ENCODE measurements at regions of chr1 and their contacts with region 1.

Region 1: DNA sequence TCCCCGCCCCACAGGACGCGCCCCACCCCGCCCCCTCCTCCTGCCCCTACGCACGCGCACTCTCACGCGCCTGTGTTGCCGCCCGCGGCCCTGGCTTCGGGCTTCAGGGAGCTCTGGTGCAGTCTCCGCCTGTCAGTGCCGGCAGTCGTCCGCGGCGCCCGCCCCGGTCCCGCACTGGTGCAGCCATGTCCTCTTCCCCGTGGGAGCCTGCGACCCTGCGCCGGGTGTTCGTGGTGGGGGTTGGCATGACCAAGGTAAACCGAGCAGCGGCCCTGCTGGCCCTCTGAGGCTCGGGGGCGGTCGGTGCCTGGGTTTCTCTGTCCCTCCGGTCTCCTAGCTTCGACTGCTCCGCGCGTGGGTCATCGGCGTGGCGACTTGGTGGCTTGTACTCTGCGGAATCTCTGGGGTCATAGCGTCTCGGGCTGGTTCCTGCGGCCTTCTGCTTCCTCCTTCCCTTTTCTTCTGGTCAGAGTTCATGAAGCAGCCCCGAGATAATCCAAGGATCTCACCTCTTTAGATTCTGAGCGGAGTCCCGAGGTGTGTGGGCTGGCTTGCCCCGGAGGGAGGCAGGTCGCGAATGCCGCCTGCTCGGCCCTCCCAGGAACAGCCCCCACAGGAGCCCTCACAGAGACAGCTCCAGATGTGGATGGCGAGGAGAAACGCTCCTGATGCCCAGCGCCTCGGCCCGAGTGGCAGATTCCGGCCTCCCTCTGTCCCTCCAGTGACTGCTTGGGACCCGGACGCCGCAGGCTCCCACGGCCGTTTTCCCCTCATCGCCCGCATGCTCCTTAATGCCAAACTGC is at the start of gene SCP2:
- DNase-seq: peak; percentile 84 to 88 (median 86)
- H3K4me3 ChIP-seq: peak within 1 kb of the TSS; percentile 74
- H3K27ac ChIP-seq: peak within 1 kb of the TSS; percentile 72 to 82
- H3K4me1 ChIP-seq: peaks cover 9% of the 10 kb centered on the region
- H3K27me3 ChIP-seq: no peaks in the 10 kb centered on the region
- CTCF ChIP-seq: no peak
- EP300 ChIP-seq: no peak
- POLR2A ChIP-seq: peak; percentile 63
- total RNA-seq, gene SCP2: 58.4 to 150 (median 105) TPM

Region 2: DNA sequence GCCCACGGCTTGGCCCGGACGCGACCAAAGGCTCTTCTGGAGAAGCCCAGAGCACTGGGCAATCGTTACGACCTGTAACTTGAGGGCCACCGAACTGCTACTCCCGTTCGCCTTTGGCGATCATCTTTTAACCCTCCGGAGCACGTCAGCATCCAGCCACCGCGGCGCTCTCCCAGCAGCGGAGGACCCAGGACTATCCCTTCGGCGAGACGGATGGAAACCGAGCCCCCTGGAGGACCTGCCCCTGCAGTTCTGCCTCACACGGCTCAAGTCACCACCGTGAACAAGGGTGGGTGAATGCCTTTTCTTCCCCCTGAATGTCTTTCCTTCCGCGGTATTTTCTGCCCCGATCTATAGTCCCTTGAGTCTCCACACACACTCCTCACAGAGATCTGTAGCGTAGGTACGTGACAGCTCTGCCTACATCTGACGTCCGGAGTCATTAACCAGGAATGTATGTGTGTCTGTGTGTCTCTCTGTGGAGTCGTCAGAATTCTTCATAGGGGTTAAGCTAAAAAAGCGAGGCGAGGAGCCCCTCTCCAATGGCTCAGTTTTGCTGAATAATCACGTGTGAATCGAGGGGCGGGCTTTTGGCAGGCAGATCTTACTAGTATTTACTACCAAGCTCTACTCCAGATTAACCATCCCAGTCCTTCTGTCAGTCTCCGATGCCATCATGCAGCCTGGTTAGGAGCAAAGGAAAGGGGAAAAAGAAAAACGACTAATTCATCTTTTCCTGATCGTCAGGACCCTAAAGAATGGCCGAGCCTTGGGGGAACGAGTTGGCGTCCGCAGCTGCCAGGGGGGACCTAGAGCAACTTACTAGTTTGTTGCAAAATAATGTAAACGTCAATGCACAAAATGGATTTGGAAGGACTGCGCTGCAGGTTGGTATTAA is 1957.6 kb before region 1 on chr1 and contains the start of gene CDKN2C:
- intact Hi-C with region 1: loop called in 1 of 4 experiments (anchors 10 kb)
- DNase-seq: peak; percentile 79 to 88 (median 85)
- H3K4me3 ChIP-seq: peak within 1 kb of the TSS; percentile 77
- H3K27ac ChIP-seq: peak within 1 kb of the TSS; percentile 98 to 99
- H3K4me1 ChIP-seq: peaks cover 4% of the 10 kb centered on the region
- H3K27me3 ChIP-seq: no peaks in the 10 kb centered on the region
- CTCF ChIP-seq: no peak
- EP300 ChIP-seq: no peak
- POLR2A ChIP-seq: no peak
- total RNA-seq, gene CDKN2C: 17.4 to 49.2 (median 32.7) TPM

Region 3: GRCh38 chr1:52702886-52703787 is 224.3 kb before region 1 on chr1:
- intact Hi-C with region 1: loop called in 1 of 4 experiments (anchors 10 kb)
- DNase-seq: peak; percentile 83 to 90 (median 84)
- H3K4me3 ChIP-seq: peak overlapping the region; percentile 58
- H3K27ac ChIP-seq: peak overlapping the region in 1 of 2 donors; percentile 60
- H3K4me1 ChIP-seq: peaks cover 3% of the 10 kb centered on the region
- H3K27me3 ChIP-seq: no peaks in the 10 kb centered on the region
- CTCF ChIP-seq: no peak
- EP300 ChIP-seq: peak; percentile 47
- POLR2A ChIP-seq: peak; percentile 49

Region 4: GRCh38 chr1:52825868-52826267 is 101.5 kb before region 1 on chr1:
- intact Hi-C with region 1: no loop called
- DNase-seq: no peak
- H3K4me3 ChIP-seq: no peak overlapping the region
- H3K27ac ChIP-seq: no peak overlapping the region
- H3K4me1 ChIP-seq: no peaks in the 10 kb centered on the region
- H3K27me3 ChIP-seq: no peaks in the 10 kb centered on the region
- CTCF ChIP-seq: no peak
- EP300 ChIP-seq: no peak
- POLR2A ChIP-seq: no peak